ENCODE measurements at regions of chr3 and their contacts with region 1.

Region 1: GRCh38 chr3:49093853-49094767 is at the start of gene QRICH1:
- DNase-seq: peak; percentile 94
- H3K4me3 Mint-ChIP-seq: peak within 1 kb of the TSS; percentile 97
- H3K27ac Mint-ChIP-seq: peak within 1 kb of the TSS; percentile 98
- H3K4me1 Mint-ChIP-seq: peaks cover 30% of the 10 kb centered on the region
- H3K27me3 Mint-ChIP-seq: no peaks in the 10 kb centered on the region
- total RNA-seq, gene QRICH1: 147 and 150 TPM in 2 replicates

Region 2: DNA sequence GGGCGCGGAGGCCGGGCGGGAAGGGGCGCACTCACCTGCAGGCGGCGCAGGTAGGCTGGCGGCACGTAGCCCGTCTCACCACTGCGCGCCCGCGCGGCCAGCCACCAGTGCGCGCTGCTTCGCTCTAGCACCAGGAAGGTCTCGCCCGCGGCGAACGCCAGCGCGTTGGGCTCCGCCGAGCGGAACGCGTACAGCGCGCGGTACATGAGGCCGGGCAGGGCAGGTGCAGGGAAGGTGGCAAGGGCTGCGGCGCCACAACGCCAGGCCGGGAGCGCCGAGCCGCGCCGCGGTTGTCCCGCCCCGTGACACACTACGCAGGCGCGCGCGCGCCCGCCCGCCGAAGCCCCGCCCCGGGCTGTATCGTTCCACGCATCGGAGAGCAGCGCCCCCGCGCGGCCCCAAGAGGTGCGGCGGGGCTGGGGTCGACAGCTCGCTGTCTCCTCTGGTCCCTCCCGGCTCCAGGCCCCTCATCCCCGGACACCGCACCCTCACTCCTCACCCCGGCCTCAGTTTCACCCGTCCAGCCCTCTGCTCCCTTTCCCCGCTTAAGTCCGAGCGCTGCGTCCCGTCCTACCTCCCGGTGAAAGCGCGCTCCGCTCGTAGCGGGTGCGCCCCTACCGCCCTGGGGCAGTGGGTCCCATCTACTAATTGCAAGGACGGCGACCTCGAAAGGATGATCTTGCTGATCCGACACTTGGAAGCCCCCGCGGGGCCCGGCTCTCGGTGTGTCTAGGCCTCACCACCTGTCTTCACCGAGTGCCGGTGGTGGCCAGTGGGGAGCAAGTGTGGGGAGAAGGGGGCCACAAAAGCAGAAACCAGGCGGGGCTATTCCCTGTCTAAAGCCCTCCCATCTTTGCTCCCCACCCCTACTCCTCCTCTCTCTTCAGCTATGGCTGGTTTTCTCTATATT is 408.3 kb before region 1 on chr3 and contains the start of gene NCKIPSD:
- intact Hi-C with region 1: loop called (anchors 10 kb)
- DNase-seq: peak; percentile 85
- H3K4me3 Mint-ChIP-seq: peak within 1 kb of the TSS; percentile 97
- H3K27ac Mint-ChIP-seq: peak within 1 kb of the TSS; percentile 95
- H3K4me1 Mint-ChIP-seq: peaks cover 38% of the 10 kb centered on the region
- H3K27me3 Mint-ChIP-seq: no peaks in the 10 kb centered on the region
- total RNA-seq, gene NCKIPSD: 40.8 and 45.5 TPM in 2 replicates

Region 3: GRCh38 chr3:48989796-48990635 is 104.1 kb before region 1 on chr3 and contains the start of gene P4HTM:
- intact Hi-C with region 1: loop called (anchors 1 kb)
- DNase-seq: peak; percentile 64
- H3K4me3 Mint-ChIP-seq: peak within 1 kb of the TSS; percentile 95
- H3K27ac Mint-ChIP-seq: peak within 1 kb of the TSS; percentile 91
- H3K4me1 Mint-ChIP-seq: peaks cover 49% of the 10 kb centered on the region
- H3K27me3 Mint-ChIP-seq: no peaks in the 10 kb centered on the region
- total RNA-seq, gene P4HTM: 34.5 and 36.8 TPM in 2 replicates

Region 4: DNA sequence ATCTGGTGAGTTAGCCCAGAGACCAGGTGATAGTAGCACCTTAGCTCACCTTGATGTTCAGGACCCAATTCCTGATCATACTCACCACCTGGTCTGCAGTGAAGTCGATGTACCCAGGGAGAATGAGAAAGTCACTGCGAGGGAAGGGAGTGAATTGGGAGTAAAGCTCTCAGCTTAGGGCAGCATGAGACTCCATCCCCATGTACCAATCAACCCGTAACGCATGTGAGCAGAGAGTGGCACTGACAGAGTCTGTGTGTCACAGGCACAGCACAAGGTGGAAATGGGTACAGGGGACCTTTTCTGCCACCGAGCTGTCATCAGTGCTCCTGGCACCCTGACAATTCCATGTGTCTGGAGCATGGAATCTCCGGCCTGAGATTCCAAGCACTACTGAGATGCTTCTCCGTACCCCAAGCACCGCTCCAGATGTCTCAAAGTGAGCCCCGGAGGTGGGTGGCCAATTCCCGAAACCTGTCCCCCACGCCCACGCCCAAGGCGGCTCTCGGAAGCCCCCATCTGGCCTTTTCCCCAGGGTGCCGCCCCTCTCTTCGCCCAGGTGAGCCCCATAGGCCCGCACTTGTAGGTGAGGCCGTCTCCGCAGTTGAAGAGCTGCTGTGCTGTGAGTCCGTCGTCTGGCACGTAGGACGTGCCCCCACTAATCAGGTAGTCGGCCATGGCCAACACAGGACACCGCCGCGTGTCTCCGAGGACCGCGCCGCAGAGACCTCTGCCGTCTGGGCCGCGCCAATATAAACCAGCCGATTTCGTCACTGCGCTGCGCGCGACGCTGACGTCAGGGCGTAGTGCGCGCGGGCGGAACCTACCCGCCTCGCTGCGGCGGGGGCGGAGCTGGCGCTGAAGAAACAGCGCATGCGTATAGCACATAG is 65.2 kb before region 1 on chr3 and contains the start of gene IMPDH2:
- intact Hi-C with region 1: loop called (anchors 1 kb)
- DNase-seq: peak; percentile 92
- H3K4me3 Mint-ChIP-seq: peak within 1 kb of the TSS; percentile 93
- H3K27ac Mint-ChIP-seq: peak within 1 kb of the TSS; percentile 90
- H3K4me1 Mint-ChIP-seq: peaks cover 50% of the 10 kb centered on the region
- H3K27me3 Mint-ChIP-seq: no peaks in the 10 kb centered on the region
- total RNA-seq, gene IMPDH2: 423 and 434 TPM in 2 replicates

Region 5: DNA sequence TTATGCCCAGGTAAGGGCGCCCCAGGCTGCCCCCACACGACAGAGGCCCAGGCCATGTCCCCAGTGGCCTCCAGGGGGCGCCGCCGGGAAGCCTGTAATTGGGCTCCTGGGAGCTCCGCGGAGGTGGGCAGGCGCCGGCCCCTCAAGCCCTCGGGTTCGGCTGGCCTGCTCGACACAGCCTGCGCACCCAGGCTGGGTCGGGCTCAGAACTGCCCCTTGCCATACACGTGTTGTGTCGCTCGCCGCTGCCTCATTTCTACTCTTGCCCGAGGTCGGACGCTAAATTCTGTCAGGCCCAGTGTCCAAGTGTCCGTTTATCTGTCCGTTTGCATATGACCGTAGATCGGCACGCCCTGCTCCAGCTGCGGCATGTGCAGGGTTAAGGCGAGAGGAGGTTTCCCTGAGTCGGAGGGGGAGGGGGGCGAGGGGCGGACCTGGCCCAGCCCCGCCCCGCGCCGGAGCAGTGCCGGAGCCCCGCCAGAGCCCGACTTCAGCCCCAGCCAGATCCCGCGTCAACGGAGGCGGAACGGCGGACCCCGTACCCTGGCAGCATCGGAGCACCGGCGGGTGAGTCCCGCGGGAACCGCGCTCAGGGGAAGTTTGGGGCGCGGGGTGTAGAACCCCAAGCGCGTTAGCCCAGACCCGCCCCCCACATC is 77.1 kb after region 1 on chr3 and contains the start of gene KLHDC8B:
- intact Hi-C with region 1: loop called (anchors 1 kb)
- DNase-seq: peak; percentile 68
- H3K4me3 Mint-ChIP-seq: peak within 1 kb of the TSS; percentile 88
- H3K27ac Mint-ChIP-seq: peak within 1 kb of the TSS; percentile 63
- H3K4me1 Mint-ChIP-seq: peaks cover 6% of the 10 kb centered on the region
- H3K27me3 Mint-ChIP-seq: no peaks in the 10 kb centered on the region
- total RNA-seq, gene KLHDC8B: 2.6 and 2.9 TPM in 2 replicates

Region 6: DNA sequence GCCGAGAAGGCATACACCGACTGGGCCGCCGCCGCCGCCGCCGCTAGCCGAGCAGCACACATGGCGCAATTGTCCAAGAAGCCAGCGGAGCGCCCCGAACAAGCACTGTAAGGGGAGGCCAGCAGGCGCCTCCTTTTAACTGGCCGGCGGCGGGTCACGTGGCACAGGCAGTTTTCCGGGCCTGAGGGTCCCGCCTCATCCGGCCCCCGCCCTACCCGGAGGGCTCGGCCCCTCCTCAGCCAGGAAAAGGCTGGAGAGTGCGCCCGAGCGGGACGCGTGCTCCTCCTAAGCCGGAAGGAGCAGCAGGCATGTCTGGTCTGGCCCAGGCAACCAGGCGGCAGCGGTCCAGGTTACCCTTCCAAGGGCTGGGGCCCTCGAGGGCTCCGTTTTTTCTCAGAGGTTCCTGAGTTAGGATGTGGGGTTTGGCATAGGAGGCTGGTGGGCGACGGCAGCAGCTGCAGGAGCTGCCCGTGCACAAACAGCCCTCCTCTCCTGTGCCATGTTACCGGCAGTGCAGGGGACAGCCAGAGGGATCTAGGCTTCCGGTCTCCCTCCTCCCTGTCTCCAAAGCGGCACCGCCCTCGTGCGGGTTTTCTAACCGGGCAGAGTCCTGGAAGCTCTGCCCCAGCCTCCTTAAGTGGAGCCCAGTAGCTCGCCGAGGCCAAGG is 264.2 kb after region 1 on chr3 and contains the start of gene GPX1:
- intact Hi-C with region 1: loop called (anchors 5 kb)
- DNase-seq: peak; percentile 83
- H3K4me3 Mint-ChIP-seq: peak within 1 kb of the TSS; percentile 94
- H3K27ac Mint-ChIP-seq: peak within 1 kb of the TSS; percentile 90
- H3K4me1 Mint-ChIP-seq: peaks cover 27% of the 10 kb centered on the region
- H3K27me3 Mint-ChIP-seq: no peaks in the 10 kb centered on the region
- total RNA-seq, gene GPX1: 181 and 188 TPM in 2 replicates

Region 7: DNA sequence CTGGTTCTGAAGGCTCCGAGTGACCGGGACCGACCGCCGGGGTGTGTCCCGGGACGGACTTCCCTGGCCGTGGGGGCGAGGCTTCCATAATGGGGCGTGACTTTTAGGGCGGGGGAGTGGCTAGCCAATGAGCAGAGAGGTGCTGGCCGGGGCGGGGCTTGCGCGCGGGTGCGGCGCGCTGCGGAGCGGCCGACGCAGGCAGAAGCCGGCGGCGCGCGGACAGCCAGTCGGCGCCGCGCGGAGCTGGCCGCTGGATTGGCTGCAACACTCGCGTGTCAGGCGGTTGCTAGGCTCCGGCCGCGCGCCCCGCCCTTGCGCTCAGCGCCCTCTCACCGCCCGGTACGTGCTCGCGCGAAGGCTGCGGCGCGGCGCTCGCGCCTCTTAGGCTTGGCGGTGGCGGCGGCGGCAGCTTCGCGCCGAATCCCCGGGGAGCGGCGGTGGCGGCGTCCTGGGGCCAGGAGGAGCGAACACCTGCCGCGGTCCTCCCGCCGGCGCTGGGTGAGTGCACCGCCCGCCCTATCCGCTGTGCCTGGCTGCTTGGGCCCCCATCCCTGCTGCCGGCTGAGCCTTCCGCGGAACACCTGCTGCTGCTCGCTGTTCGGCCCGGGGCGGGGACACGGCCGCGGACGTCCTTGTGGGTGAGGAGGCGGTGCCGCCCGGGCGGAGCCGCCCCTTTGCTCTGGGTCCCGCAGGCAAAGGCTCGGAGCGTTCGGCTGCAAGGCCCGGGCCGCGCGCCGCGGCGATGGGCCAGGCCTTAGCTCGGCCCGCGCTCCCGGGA is 376.0 kb after region 1 on chr3 and contains the start of gene DAG1:
- intact Hi-C with region 1: loop called (anchors 1 kb)
- DNase-seq: peak; percentile 96
- H3K4me3 Mint-ChIP-seq: peak within 1 kb of the TSS; percentile 92
- H3K27ac Mint-ChIP-seq: peak within 1 kb of the TSS; percentile 88
- H3K4me1 Mint-ChIP-seq: peaks cover 23% of the 10 kb centered on the region
- H3K27me3 Mint-ChIP-seq: no peaks in the 10 kb centered on the region
- total RNA-seq, gene DAG1: 20.5 and 23.7 TPM in 2 replicates